Mucosa of descending colon (tissue), 3 donors: ENCODE measurements at regions of chr22 and their contacts with region 1.

Region 1: DNA sequence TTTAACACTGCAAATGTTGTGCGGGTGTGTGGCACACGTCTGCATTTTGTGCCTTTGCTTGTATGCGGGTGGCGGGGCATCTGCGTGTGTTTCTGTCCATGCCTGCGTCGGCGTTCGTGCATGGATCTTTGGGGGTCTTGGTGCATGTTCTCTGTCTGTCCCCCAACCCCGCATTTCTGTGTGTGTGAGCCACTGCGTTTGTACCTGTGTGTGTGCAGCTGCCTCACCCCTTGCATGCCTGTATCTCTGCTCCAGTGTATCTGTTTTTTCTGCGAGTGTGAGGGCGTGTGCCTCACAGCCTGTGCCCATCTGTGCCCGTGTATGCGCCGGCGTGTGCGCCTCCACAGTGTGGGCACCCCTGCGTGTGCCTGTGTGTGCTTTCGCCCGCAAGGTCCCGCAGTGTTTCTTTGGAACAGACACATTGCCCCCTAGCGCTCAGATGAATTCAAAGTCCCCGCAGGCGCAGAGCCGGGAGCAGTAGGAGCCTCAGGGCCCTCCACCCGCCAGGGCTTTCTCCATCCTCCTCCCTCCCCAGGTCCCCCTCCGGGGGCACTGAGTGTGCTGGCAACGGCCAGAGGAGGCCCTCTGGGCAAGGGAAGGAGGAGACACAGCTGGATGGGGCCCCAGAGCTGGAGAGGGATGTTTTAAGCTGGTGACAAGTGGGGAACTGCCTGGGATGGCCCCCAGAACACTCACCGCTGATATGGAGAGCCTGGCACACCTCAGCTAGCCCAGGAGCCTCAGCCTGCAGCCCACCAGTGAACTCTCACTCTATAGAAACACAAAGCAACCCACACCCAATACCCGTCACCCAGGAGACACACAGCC is 3.1 kb upstream of the MN1 start:
- DNase-seq: peak in 2 of 3 donors; percentile 67 to 77
- ATAC-seq: peak; percentile 63
- H3K4me3 ChIP-seq: no peak overlapping the region
- H3K4me1 ChIP-seq: peaks cover 10% of the 10 kb centered on the region
- CTCF ChIP-seq: peak; percentile 36

Region 2: DNA sequence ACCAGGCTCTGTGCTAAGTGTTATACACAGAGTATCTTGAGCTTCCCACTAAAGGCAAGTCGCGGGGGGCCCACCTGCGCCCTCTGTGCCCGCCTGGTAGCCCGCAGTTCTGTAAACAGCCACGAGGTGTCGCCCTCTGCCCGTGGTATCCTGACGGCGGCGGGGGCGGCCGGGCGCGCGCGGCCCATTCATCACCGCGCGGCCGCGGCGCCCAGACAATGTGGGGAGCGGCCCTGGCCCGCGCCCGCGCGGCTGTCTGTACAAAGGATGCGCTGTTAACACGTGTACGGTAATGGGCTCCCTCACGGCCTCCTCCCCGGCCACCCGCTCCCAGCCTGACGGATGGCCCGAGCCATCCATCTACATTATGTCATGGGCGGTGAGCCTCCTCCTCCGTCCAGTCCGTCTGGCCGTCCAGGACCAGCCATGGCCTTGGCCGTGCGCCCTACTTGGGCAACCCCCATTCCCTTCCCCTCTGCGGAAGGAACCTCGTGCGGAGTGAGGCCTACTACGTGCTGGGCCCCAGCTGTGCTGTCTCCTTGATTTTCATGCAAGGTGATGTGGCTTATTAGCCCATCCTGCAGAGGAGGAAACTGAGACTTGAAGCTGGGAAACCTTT is 1047.9 kb before region 1 on chr22:
- intact Hi-C with region 1: loop called in 1 of 2 experiments (anchors 10 kb)
- DNase-seq: peak; percentile 56 to 72 (median 69)
- ATAC-seq: peak; percentile 90
- H3K4me3 ChIP-seq: no peak overlapping the region
- H3K4me1 ChIP-seq: no peaks in the 10 kb centered on the region
- CTCF ChIP-seq: peak; percentile 75

Region 3: DNA sequence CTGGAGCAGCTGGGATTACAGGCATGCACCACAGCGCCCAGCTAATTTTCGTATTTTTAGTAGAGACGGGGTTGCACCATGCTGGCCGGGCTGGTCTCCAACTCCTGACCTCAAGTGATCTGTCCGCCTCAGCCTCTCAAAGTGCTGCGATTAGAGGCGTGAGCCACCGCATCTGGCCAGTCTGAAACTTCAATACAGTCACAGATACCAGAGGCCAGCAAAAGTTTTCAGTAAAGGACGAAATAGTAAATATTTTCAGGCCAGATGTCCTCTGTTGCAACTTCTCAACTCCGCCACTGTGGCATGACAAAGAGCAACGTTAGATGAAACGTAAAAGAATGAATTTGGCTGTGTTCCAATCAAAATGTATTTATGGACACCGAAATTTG is 406.7 kb before region 1 on chr22:
- intact Hi-C with region 1: loop called in 1 of 2 experiments (anchors 5 kb)
- DNase-seq: peak; percentile 35 to 62 (median 39)
- ATAC-seq: no peak
- H3K4me3 ChIP-seq: no peak overlapping the region
- H3K4me1 ChIP-seq: no peaks in the 10 kb centered on the region
- CTCF ChIP-seq: no peak

Region 4: GRCh38 chr22:27668828-27669797 is 135.6 kb before region 1 on chr22:
- intact Hi-C with region 1: no loop called
- DNase-seq: peak; percentile 39 to 75 (median 53)
- ATAC-seq: peak; percentile 87
- H3K4me3 ChIP-seq: no peak overlapping the region
- H3K4me1 ChIP-seq: peaks cover 3% of the 10 kb centered on the region
- CTCF ChIP-seq: no peak